SK-MEL-5 (cell line): ENCODE measurements at regions of chr13 and their contacts with region 1.

Region 1: GRCh38 chr13:75437582-75438318 is 44.2 kb downstream of the TBC1D4 start:
- DNase-seq: peak; percentile 19

Region 2: DNA sequence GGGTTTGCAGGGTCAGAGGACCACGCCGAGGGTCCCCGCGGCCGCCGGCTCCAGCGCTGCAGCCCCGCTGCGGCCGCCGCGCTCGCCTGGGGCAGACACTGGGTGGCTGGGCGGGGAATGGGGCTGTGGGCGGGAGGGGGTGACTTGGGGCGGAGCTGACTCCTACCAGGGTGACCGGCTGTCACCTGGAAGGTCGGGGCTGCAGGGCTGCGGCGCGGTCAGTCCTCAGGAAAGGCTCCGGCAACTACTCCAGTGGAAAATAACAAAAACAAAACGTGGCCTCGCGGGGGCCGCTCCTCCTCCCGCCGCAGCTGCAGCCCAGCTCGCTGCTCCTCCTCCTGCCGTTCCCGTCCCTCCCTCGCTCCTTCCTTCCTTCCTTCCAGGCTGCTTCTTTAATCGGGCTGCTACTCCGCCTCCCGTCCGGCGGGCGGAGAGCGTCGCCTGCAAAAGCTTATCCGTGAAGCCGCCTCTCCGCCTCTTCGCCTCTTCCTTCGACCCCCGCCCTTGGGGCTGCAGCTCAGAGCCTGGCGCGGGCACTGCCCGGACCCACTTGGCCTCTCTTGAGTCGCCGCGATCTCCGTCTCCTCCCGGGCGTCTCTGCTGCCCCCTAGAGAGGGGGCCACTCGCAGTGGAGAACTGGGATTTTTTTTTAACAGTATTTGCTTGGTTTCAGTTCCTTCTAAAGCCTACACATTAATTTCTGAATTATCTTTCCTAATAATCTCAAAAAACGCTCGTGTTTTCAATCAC is 44.5 kb after region 1 on chr13 and contains the start of gene TBC1D4:
- in situ Hi-C with region 1: loop called (anchors 10 kb)
- DNase-seq: peak; percentile 95
- total RNA-seq, gene TBC1D4: 36.9 and 39.2 TPM in 2 replicates